HCT116 (cell line): ENCODE measurements at regions of chr17 and their contacts with region 1.

Region 1: GRCh38 chr17:6666077-6666521 is 14.5 kb downstream of the C17orf100 start:
- DNase-seq: peak; percentile 81
- ATAC-seq: peak; percentile 82
- H3K4me3 ChIP-seq: no peak overlapping the region
- H3K27ac ChIP-seq: no peak overlapping the region
- H3K4me1 ChIP-seq: peaks cover 18 to 41% of the 10 kb centered on the region in 2 experiments
- H3K27me3 ChIP-seq: no peaks in the 10 kb centered on the region; the same call in 1 of the 2 replicates
- CTCF ChIP-seq: peak; percentile 94 to 95 (median 95)
- POLR2A ChIP-seq: no peak
- RAD21 ChIP-seq: peak; percentile 99

Region 2: GRCh38 chr17:6686026-6686425 is 19.9 kb after region 1 on chr17:
- CTCF ChIA-PET with region 1: no interaction called
- POLR2A ChIA-PET with region 1: no interaction called
- RAD21 ChIA-PET with region 1: no interaction called
- intact Hi-C with region 1: no loop called
- DNase-seq: no peak
- ATAC-seq: no peak
- H3K4me3 ChIP-seq: no peak overlapping the region
- H3K27ac ChIP-seq: no peak overlapping the region
- H3K4me1 ChIP-seq: no peaks in the 10 kb centered on the region
- H3K27me3 ChIP-seq: no peaks in the 10 kb centered on the region
- CTCF ChIP-seq: no peak
- POLR2A ChIP-seq: no peak
- RAD21 ChIP-seq: no peak

Region 3: DNA sequence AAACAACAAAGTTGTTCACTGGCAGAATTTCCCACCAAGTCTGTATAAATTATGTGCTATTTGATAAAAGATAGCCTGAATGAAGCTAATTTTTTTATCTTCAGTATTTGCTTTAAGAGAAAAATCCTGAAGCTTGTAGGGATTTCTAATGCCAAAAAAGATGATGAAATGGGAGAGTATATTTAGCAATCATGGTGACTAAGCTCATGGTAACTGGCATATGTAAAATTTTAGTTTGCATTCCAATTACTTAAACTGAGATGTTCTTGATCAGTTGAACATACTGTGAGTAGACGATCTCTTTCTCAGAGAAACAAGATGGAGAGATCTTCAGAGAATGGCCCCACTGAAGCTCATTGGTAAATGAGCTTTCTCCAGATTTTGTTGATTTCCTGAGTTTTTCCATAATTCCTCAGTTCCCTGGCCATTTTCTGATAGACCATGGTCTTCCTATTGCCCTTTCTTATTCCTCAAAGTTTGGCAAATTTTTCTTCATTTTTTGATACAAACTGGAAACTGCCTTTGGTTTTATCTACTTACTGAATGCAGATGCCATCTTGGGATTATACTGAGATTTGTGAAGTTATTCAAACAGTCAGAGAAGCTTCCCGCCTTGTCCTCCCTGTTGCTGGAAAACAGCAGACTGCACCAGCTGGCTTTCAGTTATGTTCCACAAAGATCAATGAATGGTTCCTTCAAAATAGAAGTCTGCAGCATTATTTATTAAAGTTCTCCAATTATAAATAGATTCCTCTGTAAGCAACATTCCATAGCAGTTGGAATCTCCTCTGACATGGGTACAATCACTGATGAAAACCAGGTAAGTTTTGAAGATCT is 261.4 kb after region 1 on chr17:
- CTCF ChIA-PET with region 1: no interaction called
- POLR2A ChIA-PET with region 1: no interaction called
- RAD21 ChIA-PET with region 1: no interaction called
- intact Hi-C with region 1: no loop called
- DNase-seq: no peak
- ATAC-seq: no peak
- H3K4me3 ChIP-seq: no peak overlapping the region
- H3K27ac ChIP-seq: no peak overlapping the region
- H3K4me1 ChIP-seq: no peaks in the 10 kb centered on the region
- H3K27me3 ChIP-seq: no peaks in the 10 kb centered on the region
- CTCF ChIP-seq: no peak
- POLR2A ChIP-seq: no peak
- RAD21 ChIP-seq: no peak

Region 4: DNA sequence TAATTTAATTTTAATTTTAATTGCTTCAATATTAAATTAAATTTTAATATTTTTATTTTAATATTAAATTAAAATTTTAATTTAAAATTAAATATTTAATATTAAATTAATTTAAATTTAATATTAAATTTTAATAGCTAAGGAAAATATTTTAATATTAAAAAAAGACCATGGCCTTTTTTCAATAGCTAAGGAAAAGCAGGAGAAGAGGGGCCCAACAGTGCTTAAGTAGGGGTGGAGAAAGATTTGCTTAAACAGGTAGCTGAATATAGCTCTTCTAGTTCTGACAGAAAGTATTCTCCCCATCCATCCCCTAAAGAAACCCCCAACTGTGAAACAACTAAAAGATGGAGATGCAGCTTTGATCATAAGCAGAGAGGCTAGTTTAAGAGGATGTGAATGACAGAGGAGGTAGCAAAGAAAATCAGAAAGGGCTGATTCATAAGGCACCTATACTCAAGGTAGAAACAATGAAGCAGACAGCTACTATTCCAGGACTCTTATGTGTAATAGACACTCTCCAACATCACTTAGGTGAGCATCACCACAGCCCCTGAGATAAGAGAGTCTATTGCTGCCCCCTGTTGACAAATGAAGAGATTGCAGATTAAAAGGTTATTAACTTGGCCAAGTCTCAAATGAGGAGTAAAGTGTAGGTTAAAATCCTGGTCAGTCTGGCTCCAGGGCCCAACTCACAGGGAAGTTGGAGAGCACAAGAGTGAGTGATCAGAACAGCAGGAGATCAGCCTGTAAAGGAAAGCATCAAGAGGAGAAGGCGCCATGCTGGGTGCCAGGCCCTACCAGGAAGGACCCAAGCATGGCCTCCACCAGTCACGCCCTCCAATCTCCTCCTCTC is 338.5 kb after region 1 on chr17:
- CTCF ChIA-PET with region 1: interaction called, 34 read pairs
- POLR2A ChIA-PET with region 1: interaction called, 5 read pairs
- RAD21 ChIA-PET with region 1: interaction called in 1 of 2 experiments, 4 read pairs
- intact Hi-C with region 1: loop called (anchors 1 kb)
- DNase-seq: peak; percentile 56
- ATAC-seq: peak; percentile 87
- H3K4me3 ChIP-seq: no peak overlapping the region
- H3K27ac ChIP-seq: no peak overlapping the region
- H3K4me1 ChIP-seq: no peaks in the 10 kb centered on the region
- H3K27me3 ChIP-seq: no peaks in the 10 kb centered on the region
- CTCF ChIP-seq: peak; percentile 66 to 83 (median 82)
- POLR2A ChIP-seq: no peak
- RAD21 ChIP-seq: peak; percentile 91